ENCODE measurements at regions of chr7 and their contacts with region 1.

Region 1: DNA sequence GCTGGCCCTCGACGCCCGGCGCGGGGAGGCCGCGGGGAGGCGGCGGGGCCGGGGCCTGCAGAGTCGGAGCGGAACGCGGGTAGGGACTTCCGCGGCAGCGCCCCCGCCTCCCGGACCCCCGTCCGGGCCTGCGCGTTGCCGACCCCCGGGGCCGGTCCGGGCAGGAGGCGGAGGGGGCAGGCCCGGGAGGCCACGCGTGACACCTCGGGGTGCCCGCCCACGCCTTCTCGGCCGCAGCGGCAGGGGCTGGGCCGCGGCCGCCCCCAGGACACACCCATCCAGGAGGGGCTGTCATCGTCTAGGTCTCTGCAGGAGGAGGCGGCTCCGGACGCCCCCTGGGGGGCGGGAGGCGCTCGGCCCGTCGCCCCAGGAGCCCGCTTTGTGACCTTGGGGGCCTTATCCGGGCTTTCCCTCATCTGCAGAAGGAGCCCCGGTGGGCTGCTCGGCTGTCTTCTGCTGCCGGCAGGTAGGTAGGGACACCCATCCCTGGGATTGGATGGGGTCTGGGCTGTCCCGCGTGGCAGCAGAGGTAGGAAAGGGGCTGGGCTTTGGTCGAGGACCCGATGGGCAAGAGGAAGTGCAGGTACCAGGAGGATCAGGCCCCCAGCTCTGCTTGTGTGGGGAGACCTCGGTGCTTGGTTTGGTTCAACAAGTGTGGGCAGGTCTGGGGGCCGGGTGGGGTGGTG is 569 bp downstream of the ZNF316 start:
- DNase-seq: peak; percentile 68
- ATAC-seq: peak; percentile 86
- H3K4me3 Mint-ChIP-seq: peak overlapping the region; percentile 86
- H3K27ac Mint-ChIP-seq: peak overlapping the region; percentile 76
- H3K4me1 Mint-ChIP-seq: peaks cover 29% of the 10 kb centered on the region
- H3K27me3 Mint-ChIP-seq: no peaks in the 10 kb centered on the region
- CTCF ChIP-seq: no peak

Region 2: GRCh38 chr7:5294169-5294987 is 1343.3 kb before region 1 on chr7:
- CTCF ChIA-PET with region 1: no interaction called
- POLR2A ChIA-PET with region 1: no interaction called
- intact Hi-C with region 1: no loop called
- DNase-seq: no peak
- ATAC-seq: no peak
- H3K4me3 Mint-ChIP-seq: no peak overlapping the region
- H3K27ac Mint-ChIP-seq: no peak overlapping the region
- H3K4me1 Mint-ChIP-seq: peaks cover 12% of the 10 kb centered on the region
- H3K27me3 Mint-ChIP-seq: peaks cover 19% of the 10 kb centered on the region
- CTCF ChIP-seq: no peak

Region 3: DNA sequence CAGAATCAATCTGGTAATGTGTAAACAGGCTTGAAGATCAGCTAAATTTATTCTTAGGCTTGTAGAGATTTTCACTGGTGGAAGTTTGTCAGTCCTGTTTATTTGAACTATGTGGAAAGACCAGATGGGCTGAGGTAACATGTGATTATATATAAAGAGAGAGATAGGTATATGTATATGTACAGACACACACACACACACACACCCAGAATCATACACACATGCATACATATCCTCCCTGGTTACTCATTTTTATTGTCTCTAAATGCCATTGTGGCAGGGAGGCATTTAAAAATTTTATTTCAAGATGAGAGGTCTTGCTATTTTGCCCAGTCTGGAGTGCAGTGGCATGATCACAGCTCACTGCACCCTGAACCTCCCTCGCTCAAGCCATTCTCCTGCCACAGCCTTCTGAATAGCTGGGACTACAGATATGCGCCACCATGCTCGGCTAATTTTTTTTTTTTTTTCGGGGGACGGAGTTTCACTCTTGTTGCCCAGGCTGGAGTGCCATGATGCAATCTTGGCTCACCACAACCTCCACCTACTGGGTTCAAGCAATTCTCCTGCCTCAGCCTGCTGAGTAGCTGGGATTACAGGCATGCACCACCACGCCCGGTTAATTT is 287.1 kb before region 1 on chr7:
- CTCF ChIA-PET with region 1: no interaction called
- POLR2A ChIA-PET with region 1: interaction called, 12 read pairs
- intact Hi-C with region 1: no loop called
- DNase-seq: no peak
- ATAC-seq: no peak
- H3K4me3 Mint-ChIP-seq: no peak overlapping the region
- H3K27ac Mint-ChIP-seq: peak overlapping the region; percentile 65
- H3K4me1 Mint-ChIP-seq: peaks cover 22% of the 10 kb centered on the region
- H3K27me3 Mint-ChIP-seq: no peaks in the 10 kb centered on the region
- CTCF ChIP-seq: no peak

Region 4: GRCh38 chr7:6516387-6516983 is 121.2 kb before region 1 on chr7:
- CTCF ChIA-PET with region 1: no interaction called
- POLR2A ChIA-PET with region 1: no interaction called
- intact Hi-C with region 1: loop called (anchors 1 kb)
- DNase-seq: peak; percentile 42
- ATAC-seq: peak; percentile 78
- H3K4me3 Mint-ChIP-seq: peak overlapping the region; percentile 81
- H3K27ac Mint-ChIP-seq: peak overlapping the region; percentile 78
- H3K4me1 Mint-ChIP-seq: peaks cover 18% of the 10 kb centered on the region
- H3K27me3 Mint-ChIP-seq: no peaks in the 10 kb centered on the region
- CTCF ChIP-seq: peak; percentile 76

Region 5: DNA sequence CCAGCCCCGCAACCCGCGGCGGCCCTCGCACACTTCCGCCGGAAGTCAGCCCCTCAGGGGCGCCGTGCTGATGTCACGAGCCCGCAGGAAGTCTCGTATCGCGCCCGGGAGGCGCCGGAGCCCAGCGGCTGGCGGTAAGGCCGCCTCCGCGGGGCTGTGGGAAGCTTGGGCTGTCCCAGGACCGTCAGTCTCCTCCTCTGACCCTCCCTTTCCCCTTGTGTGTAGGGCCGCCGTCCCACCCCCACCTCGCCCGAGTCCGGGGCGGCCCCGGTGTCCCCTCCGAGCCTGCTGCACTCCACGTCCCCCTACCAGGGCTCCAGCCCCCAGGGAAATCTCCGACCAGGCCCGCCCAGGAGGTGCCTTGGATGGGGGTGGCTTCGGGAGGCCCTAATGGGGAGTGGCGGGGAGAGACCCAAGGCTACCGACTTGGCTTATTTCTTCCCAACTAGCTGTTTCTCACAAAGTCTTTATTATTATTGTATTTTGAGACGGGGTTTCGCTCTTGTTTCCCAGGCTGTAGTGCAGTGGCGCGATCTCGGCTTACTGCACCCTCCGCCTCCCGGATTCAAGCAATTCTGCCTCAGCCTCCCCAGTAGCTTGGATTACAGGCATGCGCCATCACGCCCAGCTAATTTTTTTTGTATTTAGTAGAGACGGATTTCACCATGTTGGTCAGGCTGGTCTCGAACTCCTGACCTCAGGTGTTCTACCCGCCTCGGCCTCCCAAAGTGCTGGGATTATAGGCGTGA is 60.1 kb before region 1 on chr7 and contains the start of gene ZDHHC4:
- CTCF ChIA-PET with region 1: no interaction called
- POLR2A ChIA-PET with region 1: interaction called, 4 read pairs
- intact Hi-C with region 1: loop called (anchors 1 kb)
- DNase-seq: peak; percentile 86
- ATAC-seq: peak; percentile 88
- H3K4me3 Mint-ChIP-seq: peak within 1 kb of the TSS; percentile 88
- H3K27ac Mint-ChIP-seq: peak within 1 kb of the TSS; percentile 89
- H3K4me1 Mint-ChIP-seq: peaks cover 26% of the 10 kb centered on the region
- H3K27me3 Mint-ChIP-seq: no peaks in the 10 kb centered on the region
- CTCF ChIP-seq: no peak
- total RNA-seq, gene ZDHHC4: 33.2 and 37.4 TPM in 2 replicates

Region 6: GRCh38 chr7:6589829-6590644 is 47.6 kb before region 1 on chr7 and contains the start of gene INTS15:
- CTCF ChIA-PET with region 1: interaction called, 4 read pairs
- POLR2A ChIA-PET with region 1: no interaction called
- intact Hi-C with region 1: loop called (anchors 1 kb)
- DNase-seq: peak; percentile 93
- ATAC-seq: peak; percentile 90
- H3K4me3 Mint-ChIP-seq: peak within 1 kb of the TSS; percentile 89
- H3K27ac Mint-ChIP-seq: peak within 1 kb of the TSS; percentile 80
- H3K4me1 Mint-ChIP-seq: peaks cover 21% of the 10 kb centered on the region
- H3K27me3 Mint-ChIP-seq: no peaks in the 10 kb centered on the region
- CTCF ChIP-seq: no peak
- total RNA-seq, gene INTS15: 49.0 and 49.9 TPM in 2 replicates

Region 7: DNA sequence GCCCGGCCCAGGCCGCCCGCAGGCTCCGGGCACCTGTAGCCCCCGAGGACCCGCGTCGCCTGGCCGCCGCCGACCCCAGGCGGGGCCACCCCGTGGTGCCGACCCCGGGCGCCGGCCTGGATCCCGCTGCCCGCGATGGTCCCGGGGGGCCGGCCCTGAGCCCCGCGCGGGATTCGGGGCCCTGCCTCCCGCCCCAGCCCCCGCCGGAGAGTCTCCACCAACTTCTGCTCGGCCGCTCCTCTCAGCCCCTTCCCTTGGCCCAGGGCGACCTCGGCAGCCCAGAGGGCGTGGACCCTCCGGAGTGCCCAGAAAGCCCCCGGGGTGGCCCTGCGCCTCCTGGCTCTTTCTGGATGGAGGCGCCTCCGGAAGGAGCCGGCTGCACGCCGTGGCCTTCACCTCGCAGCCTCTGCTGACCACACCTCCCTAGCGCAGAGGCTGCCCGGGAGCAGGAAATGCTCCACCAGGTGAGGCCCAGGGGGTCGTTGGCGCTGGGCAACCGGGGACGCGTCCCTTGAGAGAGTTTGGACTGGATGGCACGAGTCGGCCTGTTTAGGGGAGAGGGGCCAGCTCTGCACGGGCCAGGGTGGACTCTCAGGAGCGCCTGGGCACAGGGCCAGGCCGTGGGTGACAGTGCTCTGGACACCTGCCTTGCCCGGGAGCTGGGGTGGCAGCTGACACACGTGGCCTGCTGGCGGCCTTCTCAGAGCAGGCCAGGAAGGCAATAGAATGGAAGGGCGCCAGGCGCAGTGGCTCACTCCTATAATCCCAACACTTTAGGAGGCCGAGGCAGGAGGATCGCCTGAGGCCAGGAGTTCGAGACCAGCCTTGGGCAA is 21.7 kb before region 1 on chr7:
- CTCF ChIA-PET with region 1: no interaction called
- POLR2A ChIA-PET with region 1: interaction called, 6 read pairs
- intact Hi-C with region 1: loop called (anchors 2 kb)
- DNase-seq: no peak
- ATAC-seq: peak; percentile 23
- H3K4me3 Mint-ChIP-seq: peak overlapping the region; percentile 64
- H3K27ac Mint-ChIP-seq: no peak overlapping the region
- H3K4me1 Mint-ChIP-seq: peaks cover 22% of the 10 kb centered on the region
- H3K27me3 Mint-ChIP-seq: peaks cover 3% of the 10 kb centered on the region
- CTCF ChIP-seq: no peak

Region 8: DNA sequence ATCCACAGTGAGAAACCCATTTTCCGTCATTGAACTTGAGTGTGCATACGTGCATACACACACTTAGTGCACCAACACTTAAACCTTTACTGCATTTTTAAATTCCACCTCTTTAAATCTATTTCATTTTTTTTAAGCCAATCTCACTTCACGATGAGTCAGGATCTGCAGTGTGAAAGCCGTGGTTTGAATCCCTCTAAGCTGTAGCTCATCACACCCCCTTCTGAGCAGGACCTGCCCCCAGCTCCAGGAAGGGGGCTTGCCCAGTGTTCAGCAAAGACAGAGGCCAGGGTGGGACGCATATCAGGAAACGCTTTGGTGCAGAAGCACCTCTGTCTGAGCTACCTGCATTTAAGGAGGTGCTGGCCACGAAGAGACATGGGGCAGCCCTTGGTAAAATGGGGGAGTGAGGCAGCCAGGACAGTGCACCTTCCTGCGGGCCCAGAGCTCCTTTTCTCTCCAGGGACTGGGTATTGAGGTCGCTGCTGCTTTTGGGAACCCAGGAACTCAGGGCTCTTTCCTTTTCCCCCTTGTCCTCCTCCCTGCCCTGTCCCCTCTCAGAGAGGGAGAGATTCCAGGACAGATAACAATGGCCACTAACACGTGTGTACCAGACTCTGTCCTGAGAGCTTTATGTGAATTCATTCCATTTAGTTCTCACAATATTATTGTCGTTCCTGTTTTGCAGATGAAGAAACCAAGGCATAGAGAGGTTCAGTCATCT is 21.1 kb after region 1 on chr7:
- CTCF ChIA-PET with region 1: no interaction called
- POLR2A ChIA-PET with region 1: no interaction called
- intact Hi-C with region 1: no loop called
- DNase-seq: no peak
- ATAC-seq: no peak
- H3K4me3 Mint-ChIP-seq: no peak overlapping the region
- H3K27ac Mint-ChIP-seq: no peak overlapping the region
- H3K4me1 Mint-ChIP-seq: no peaks in the 10 kb centered on the region
- H3K27me3 Mint-ChIP-seq: peaks cover 9% of the 10 kb centered on the region
- CTCF ChIP-seq: no peak

Region 9: DNA sequence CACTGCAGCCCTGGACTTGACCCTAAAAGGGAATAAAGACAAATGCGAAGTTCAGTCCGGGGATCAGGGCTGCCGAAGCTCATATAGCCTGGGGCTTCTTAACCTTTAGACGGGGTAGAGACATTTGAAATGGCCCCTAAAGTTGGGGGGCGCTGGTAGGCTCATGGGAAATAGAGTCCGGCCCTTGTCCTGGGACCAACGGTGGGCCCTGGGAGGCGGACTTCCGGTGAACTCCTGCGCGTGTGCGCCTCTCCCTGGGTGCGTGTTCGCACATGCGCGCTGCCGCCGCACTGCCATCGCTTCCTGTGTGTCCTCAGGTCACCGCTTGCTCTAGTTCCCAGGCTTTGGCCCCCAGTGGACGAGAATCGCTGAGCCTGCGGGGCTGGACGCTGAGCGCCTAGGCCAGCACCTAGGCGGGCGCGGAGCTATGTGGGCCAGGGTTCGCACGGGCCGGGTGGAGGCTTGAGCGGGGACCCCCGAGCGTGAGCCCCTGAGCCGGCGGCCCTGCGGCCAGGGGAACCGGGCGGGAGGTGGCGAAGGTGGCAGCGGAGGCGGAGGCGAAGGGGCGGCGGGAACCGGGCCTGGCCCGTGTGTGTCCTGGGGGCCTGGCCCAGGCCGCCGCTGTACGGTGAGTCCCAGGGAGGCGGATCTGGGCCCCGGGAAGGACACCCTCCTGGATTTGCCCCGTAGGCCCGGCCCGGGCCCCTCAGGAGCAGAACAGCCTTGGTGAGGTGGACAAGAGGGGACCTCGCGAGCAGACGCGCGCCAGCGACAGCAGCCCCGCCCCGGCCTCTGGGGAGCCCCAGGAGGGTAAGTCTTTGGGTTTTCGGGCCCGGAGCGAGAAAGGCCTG is 92.0 kb after region 1 on chr7:
- CTCF ChIA-PET with region 1: no interaction called
- POLR2A ChIA-PET with region 1: interaction called, 9 read pairs
- intact Hi-C with region 1: loop called (anchors 2 kb)
- DNase-seq: peak; percentile 75
- ATAC-seq: peak; percentile 88
- H3K4me3 Mint-ChIP-seq: peak overlapping the region; percentile 88
- H3K27ac Mint-ChIP-seq: peak overlapping the region; percentile 78
- H3K4me1 Mint-ChIP-seq: peaks cover 40% of the 10 kb centered on the region
- H3K27me3 Mint-ChIP-seq: no peaks in the 10 kb centered on the region
- CTCF ChIP-seq: no peak